GM10248 (cell line): ENCODE measurements at regions of chr20 and their contacts with region 1.

Region 1: GRCh38 chr20:49982346-49983122 is at the start of gene SNAI1:
- DNase-seq: peak; percentile 99
- CTCF ChIP-seq: peak; percentile 54

Region 2: DNA sequence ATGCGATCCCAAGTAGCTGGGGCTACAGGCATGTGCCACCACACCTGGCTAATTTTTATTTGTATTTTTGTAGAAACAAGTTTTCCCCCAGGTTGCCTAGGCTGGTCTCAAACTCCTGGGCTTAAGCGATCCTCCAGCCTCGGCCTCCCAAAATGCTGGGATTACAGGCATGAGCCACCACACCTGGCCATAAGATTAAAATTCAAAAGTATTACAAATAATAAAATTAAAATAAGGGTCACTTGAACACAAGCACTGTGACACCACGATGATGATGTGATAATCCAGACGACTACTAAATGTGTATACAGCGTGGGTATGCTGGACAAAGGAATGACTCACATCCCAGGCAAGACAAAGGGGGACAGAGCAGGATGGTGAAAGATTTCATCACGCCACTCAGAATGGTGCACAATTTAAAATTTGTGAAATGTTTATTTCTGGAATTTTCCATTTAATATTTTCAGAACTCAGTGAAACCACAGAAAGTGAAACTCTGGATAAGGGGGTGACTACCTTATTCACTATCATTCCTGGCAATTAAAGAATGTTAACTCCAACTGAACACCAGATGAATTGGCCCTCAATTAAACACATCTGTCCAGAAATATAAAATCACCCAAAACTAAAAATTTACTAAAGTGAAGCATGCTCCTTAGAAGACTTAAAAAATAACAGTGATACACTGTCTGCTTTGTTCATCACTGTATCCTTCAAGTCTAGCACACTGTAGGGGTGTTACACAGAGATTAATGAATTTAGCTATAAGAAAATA is 281.9 kb before region 1 on chr20:
- CTCF ChIA-PET with region 1: no interaction called
- POLR2A ChIA-PET with region 1: no interaction called
- DNase-seq: no peak
- CTCF ChIP-seq: no peak

Region 3: DNA sequence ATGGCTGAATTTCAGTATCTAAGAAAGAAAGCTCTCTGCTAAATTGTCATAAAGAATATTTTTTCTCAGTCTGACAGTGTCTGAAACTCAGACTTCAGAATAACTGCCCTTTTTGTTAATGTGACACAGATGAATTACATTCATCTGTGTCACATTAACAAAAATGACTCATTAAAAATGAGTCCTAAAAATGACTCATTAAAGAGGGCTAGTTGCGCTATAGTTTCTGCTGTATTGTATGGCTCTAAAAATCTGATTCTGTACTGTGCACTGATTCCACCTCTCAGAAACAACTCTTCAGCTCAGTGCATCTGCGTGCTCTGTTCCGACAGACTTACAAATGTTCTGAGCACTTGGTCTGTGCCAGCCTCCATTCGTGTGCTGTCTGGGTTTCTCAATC is 31.4 kb before region 1 on chr20:
- CTCF ChIA-PET with region 1: interaction called, 14 read pairs
- POLR2A ChIA-PET with region 1: no interaction called
- DNase-seq: no peak
- CTCF ChIP-seq: no peak

Region 4: DNA sequence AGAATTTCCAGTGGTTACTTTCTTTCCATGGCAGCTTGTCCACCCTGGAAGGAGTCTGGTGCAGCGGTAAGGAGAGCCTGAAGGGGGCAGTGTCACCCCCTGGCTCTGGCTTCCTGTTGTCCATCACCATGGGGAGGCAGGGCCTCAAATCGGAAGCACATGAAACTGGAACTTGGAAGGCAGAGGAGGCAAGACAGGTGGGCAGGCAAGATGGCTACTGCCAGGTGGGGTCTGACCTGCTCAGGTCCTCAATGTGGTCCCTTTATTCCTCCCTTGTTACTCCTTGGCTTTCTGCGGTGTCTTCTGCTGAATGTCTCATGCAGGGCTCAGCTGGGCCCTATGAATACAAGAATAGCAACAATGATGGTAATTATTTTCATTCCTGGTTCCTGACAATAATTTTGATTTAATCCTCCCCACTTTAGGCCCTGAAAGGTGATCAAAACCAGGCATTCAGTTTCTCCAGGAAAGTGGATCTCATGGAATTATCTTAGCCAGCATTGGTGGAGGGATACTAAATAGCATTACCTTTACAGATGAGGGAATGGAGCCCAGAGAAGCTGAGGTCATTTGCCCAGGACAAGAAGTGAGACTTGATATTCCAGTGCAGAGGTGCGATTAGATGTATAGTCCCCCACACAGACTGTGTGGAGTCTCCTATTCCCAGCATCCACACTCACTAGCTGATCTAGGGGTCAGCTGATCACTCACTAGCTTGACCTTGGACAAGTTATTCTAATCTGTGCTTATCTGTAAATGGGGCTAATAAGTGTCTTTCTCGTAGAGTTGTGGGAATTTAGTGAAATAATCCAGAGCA is 17.4 kb before region 1 on chr20:
- CTCF ChIA-PET with region 1: interaction called, 73 read pairs
- POLR2A ChIA-PET with region 1: no interaction called
- DNase-seq: peak; percentile 58
- CTCF ChIP-seq: peak; percentile 43

Region 5: GRCh38 chr20:50012282-50013263 is 30.0 kb after region 1 on chr20:
- CTCF ChIA-PET with region 1: interaction called, 21 read pairs
- POLR2A ChIA-PET with region 1: no interaction called
- DNase-seq: peak; percentile 54
- CTCF ChIP-seq: no peak

Region 6: DNA sequence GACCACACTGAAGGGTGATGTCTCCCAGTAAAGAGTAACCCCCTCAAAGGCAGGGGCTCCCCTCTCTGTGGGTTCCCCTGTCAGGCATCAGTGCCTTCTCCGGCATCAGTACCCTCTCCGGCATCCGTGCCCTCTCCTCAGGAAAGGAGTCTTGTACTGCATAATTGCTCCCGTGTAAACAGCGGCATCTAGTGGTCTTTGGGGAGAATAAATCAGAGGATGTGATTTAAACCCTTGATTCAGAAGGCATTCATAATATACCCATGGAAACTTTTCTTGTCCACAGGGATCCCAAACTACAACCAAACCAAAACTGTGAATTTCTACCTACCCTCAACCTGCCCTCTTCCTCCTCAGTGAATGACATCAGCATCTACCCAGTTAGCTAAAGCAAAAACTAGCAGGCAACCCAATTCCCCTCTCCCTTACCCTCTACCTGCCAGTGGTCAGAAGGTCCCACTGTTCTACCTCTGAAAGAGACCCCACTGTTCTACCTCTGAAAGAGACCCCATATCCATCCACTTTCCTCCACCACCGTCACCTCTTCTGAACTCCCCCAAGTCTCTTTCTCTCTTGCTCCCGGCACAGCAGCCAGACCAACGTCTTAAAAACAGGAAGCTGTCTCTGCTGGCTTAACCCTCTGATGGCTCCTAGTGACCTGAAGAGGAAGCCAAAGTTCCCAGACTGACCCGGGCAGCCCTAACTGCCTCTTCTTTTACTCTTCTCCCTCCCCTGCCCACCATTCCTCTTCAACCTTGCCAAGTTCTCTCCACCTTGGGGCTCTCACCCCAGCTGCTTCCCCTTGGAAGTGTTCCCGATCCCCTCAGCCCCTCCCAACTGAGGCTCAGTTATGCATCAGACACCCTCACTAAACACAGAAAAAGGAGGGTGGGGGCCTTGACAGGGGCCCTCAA is 103.2 kb after region 1 on chr20:
- CTCF ChIA-PET with region 1: interaction called, 49 read pairs
- POLR2A ChIA-PET with region 1: no interaction called
- DNase-seq: peak; percentile 72
- CTCF ChIP-seq: peak; percentile 77

Region 7: GRCh38 chr20:50110141-50110925 is 127.8 kb after region 1 on chr20:
- CTCF ChIA-PET with region 1: interaction called, 13 read pairs
- POLR2A ChIA-PET with region 1: no interaction called
- DNase-seq: peak; percentile 51
- CTCF ChIP-seq: no peak

Region 8: DNA sequence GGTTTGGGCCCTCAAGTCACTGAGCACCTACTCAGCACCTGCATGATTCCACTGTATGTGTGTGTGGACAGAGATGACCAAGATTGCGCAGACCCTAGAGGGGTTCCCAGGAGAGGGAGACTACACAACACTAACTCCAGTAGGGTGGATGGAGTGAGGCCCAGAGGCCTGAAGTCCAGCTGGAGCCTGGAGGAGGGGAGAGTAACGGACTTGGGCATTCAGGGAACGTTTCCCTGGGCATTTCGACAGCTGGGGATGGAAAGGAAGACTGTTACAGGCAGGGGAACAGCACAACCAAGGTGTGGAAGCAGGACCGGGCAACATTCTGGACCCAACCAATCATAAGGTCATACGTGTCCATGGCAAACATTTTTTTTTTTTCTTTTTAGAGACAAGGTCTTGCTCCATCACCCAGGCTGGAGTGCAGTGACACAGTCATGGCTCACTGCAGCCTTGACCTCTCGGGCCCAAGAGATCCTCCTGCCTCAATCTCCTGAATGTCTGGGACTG is 197.0 kb after region 1 on chr20:
- CTCF ChIA-PET with region 1: interaction called, 25 read pairs
- POLR2A ChIA-PET with region 1: no interaction called
- DNase-seq: no peak
- CTCF ChIP-seq: no peak

Region 9: GRCh38 chr20:50625986-50626677 is 643.6 kb after region 1 on chr20:
- CTCF ChIA-PET with region 1: no interaction called
- POLR2A ChIA-PET with region 1: no interaction called
- DNase-seq: no peak
- CTCF ChIP-seq: peak; percentile 34